Activated B cell treated with CpG ODN at 0.5 μM for 24 hours (primary cell): ENCODE measurements at regions of chr7 and their contacts with region 1.

Region 1: GRCh38 chr7:135645296-135645904 is 16.9 kb upstream of the STMP1 start:
- DNase-seq: no peak
- ATAC-seq: peak; percentile 62
- H3K4me3 Mint-ChIP-seq: no peak overlapping the region
- H3K27ac Mint-ChIP-seq: no peak overlapping the region
- H3K4me1 Mint-ChIP-seq: no peaks in the 10 kb centered on the region
- H3K27me3 Mint-ChIP-seq: no peaks in the 10 kb centered on the region
- CTCF ChIP-seq: peak; percentile 73

Region 2: GRCh38 chr7:135274495-135275268 is 370.7 kb before region 1 on chr7:
- CTCF ChIA-PET with region 1: interaction called, 81 read pairs
- POLR2A ChIA-PET with region 1: no interaction called
- intact Hi-C with region 1: loop called (anchors 1 kb)
- DNase-seq: peak; percentile 49
- ATAC-seq: peak; percentile 96
- H3K4me3 Mint-ChIP-seq: no peak overlapping the region
- H3K27ac Mint-ChIP-seq: no peak overlapping the region
- H3K4me1 Mint-ChIP-seq: peaks cover 2% of the 10 kb centered on the region
- H3K27me3 Mint-ChIP-seq: peaks cover 6% of the 10 kb centered on the region
- CTCF ChIP-seq: peak; percentile 88

Region 3: GRCh38 chr7:135281363-135281949 is 363.9 kb before region 1 on chr7:
- CTCF ChIA-PET with region 1: interaction called, 81 read pairs
- POLR2A ChIA-PET with region 1: no interaction called
- intact Hi-C with region 1: loop called (anchors 1 kb)
- DNase-seq: peak; percentile 24
- ATAC-seq: peak; percentile 100
- H3K4me3 Mint-ChIP-seq: no peak overlapping the region
- H3K27ac Mint-ChIP-seq: no peak overlapping the region
- H3K4me1 Mint-ChIP-seq: peaks cover 10% of the 10 kb centered on the region
- H3K27me3 Mint-ChIP-seq: peaks cover 6% of the 10 kb centered on the region
- CTCF ChIP-seq: peak; percentile 98

Region 4: DNA sequence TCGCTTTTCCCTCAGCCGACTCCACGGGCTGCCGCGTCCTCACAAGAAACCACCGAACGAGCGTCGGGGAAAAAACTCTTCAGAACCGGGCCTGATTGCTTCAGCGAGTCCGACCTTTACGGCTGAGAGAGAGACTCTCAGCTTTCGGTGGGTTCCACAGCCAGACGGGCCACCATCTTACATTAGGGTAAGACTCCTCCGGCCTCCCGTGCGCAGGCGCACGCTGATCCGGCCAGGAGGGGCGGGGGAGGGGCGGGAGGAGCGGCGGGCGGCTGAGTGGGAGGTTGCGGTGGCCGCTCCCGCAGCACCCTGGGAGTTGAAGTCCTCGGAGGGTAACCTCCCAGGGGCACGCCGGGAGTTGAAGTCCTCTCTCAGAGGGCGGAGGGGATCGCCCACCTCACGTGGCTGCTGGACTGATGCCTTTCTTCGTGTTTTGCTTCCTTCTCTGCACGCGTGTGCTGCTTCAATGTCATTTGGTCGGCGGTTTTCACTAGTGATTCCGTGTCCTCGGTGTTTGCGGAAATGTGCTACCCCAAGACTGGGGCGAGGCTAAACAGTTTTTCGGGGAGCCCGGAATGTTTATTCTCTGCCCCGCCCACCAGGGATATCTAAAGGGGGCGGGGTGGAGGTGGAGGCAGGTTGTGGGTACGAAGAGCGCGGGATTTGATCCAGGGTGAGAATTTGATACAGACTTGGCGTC is 135.3 kb before region 1 on chr7 and contains the start of gene CNOT4:
- CTCF ChIA-PET with region 1: interaction called, 6 read pairs
- POLR2A ChIA-PET with region 1: no interaction called
- intact Hi-C with region 1: loop called (anchors 1 kb)
- DNase-seq: peak; percentile 87
- ATAC-seq: peak; percentile 96
- H3K4me3 Mint-ChIP-seq: no peak within 1 kb of the TSS
- H3K27ac Mint-ChIP-seq: no peak within 1 kb of the TSS
- H3K4me1 Mint-ChIP-seq: peaks cover 10% of the 10 kb centered on the region
- H3K27me3 Mint-ChIP-seq: no peaks in the 10 kb centered on the region
- CTCF ChIP-seq: no peak
- total RNA-seq, gene CNOT4: 34.4 and 36.8 TPM in 2 replicates

Region 5: GRCh38 chr7:135620980-135621850 is 24.2 kb before region 1 on chr7:
- CTCF ChIA-PET with region 1: interaction called, 10 read pairs
- POLR2A ChIA-PET with region 1: no interaction called
- intact Hi-C with region 1: no loop called
- DNase-seq: no peak
- ATAC-seq: no peak
- H3K4me3 Mint-ChIP-seq: no peak overlapping the region
- H3K27ac Mint-ChIP-seq: no peak overlapping the region
- H3K4me1 Mint-ChIP-seq: no peaks in the 10 kb centered on the region
- H3K27me3 Mint-ChIP-seq: no peaks in the 10 kb centered on the region
- CTCF ChIP-seq: peak; percentile 80